ENCODE measurements at regions of chr13 and their contacts with region 1.

Region 1: GRCh38 chr13:113296842-113297369 is at the start of gene LAMP1:
- DNase-seq: peak; percentile 94
- H3K4me3 ChIP-seq: peak within 1 kb of the TSS; percentile 83 to 91 (median 91)
- H3K27ac ChIP-seq: peak within 1 kb of the TSS; percentile 78
- H3K4me1 ChIP-seq: peaks cover 3% of the 10 kb centered on the region
- H3K27me3 ChIP-seq: no peaks in the 10 kb centered on the region
- CTCF ChIP-seq: no peak
- total RNA-seq, gene LAMP1: 242 to 252 TPM

Region 2: GRCh38 chr13:113122550-113123225 is 174.2 kb before region 1 on chr13 and contains the start of gene F10:
- CTCF ChIA-PET with region 1: no interaction called
- dilution Hi-C with region 1: no loop called
- in situ Hi-C with region 1: no loop called
- intact Hi-C with region 1: no loop called
- DNase-seq: no peak
- H3K4me3 ChIP-seq: no peak within 1 kb of the TSS
- H3K27ac ChIP-seq: no peak within 1 kb of the TSS
- H3K4me1 ChIP-seq: no peaks in the 10 kb centered on the region
- H3K27me3 ChIP-seq: no peaks in the 10 kb centered on the region
- CTCF ChIP-seq: no peak
- total RNA-seq, gene F10: not detected

Region 3: GRCh38 chr13:113153810-113154748 is 142.8 kb before region 1 on chr13:
- CTCF ChIA-PET with region 1: interaction called, 20 read pairs
- dilution Hi-C with region 1: no loop called
- in situ Hi-C with region 1: no loop called
- intact Hi-C with region 1: no loop called
- DNase-seq: peak; percentile 29
- H3K4me3 ChIP-seq: peak overlapping the region; percentile 41 to 55 (median 48)
- H3K27ac ChIP-seq: no peak overlapping the region
- H3K4me1 ChIP-seq: peaks cover 9% of the 10 kb centered on the region
- H3K27me3 ChIP-seq: peaks cover 2% of the 10 kb centered on the region
- CTCF ChIP-seq: no peak

Region 4: DNA sequence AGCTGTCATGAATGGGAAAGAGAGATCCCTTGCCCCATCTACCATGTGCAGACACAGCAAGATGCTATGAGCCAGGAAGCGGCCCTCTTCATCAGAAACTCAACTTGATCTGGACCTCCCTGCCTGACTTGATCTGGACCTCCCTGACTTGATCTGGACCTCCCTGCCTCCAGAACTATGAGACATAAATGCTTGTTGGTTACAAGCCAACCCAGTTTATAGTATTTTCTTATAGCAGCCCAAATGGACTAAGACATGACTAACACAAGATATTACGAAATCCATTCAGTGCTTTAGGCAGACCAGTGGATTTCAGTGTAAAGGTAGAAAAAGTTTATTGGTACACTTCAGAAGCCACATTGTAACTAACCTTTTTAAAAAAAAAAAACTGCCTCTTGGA is 104.0 kb before region 1 on chr13:
- CTCF ChIA-PET with region 1: no interaction called
- dilution Hi-C with region 1: no loop called
- in situ Hi-C with region 1: no loop called
- intact Hi-C with region 1: no loop called
- DNase-seq: peak; percentile 56
- H3K4me3 ChIP-seq: no peak overlapping the region
- H3K27ac ChIP-seq: no peak overlapping the region
- H3K4me1 ChIP-seq: peaks cover 3% of the 10 kb centered on the region
- H3K27me3 ChIP-seq: no peaks in the 10 kb centered on the region
- CTCF ChIP-seq: no peak

Region 5: GRCh38 chr13:113258321-113259054 is 38.4 kb before region 1 on chr13:
- CTCF ChIA-PET with region 1: no interaction called
- dilution Hi-C with region 1: loop called (anchors 5 kb)
- in situ Hi-C with region 1: no loop called
- intact Hi-C with region 1: no loop called
- DNase-seq: no peak
- H3K4me3 ChIP-seq: no peak overlapping the region
- H3K27ac ChIP-seq: no peak overlapping the region
- H3K4me1 ChIP-seq: no peaks in the 10 kb centered on the region
- H3K27me3 ChIP-seq: no peaks in the 10 kb centered on the region
- CTCF ChIP-seq: no peak

Region 6: GRCh38 chr13:113364311-113364889 is 67.5 kb after region 1 on chr13:
- CTCF ChIA-PET with region 1: no interaction called
- dilution Hi-C with region 1: no loop called
- in situ Hi-C with region 1: no loop called
- intact Hi-C with region 1: loop called (anchors 5 kb)
- DNase-seq: no peak
- H3K4me3 ChIP-seq: peak overlapping the region in 1 of 3 experiments; percentile 35
- H3K27ac ChIP-seq: no peak overlapping the region
- H3K4me1 ChIP-seq: peaks cover 6% of the 10 kb centered on the region
- H3K27me3 ChIP-seq: no peaks in the 10 kb centered on the region
- CTCF ChIP-seq: no peak

Region 7: DNA sequence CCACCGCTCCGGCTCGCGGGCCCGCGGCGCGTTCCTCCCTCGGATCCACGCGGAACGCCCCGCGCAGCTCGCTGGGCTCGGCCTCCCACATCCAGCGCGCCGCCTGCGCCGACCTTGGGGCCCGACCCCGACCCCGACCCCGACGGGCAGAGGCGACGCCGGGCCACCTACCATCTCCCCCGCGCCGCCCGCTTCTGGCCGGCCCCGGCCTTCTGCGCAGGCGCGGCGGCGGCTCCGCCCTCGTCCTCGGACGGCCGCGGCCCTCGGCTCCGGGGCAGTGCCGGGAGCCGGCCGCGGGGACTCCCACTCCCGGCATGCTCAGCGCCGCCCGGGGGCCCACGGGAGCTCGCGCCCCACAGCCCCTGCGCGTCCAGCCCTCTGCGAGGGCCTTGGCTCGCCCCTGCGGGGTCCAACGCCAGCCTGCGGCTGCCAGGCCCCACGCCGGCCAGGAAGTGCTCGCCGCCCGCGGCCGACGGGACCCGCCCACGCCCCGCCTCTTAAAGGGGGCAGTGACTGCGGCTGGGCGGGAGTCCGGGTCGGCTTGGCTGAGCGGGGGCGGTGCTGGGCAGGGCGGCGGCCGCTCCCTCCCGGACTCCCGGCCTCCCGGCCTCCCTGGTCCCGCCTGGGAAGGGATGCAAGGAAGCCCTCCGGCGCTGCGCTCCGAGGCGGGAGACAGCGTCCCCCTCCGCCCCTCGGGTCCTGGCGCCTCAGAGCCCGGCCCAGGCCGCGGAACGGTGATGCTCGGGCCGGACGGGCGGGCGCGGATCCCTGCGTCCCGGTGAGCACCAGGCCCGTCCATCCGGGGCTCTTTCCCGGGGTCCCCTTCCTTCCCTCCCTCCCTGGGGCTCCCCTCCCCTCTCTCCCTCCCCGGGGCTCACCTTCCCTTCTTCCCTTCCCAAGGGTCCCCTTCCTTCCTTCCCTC is 193.9 kb after region 1 on chr13 and contains the start of gene DCUN1D2:
- CTCF ChIA-PET with region 1: no interaction called
- dilution Hi-C with region 1: no loop called
- in situ Hi-C with region 1: no loop called
- intact Hi-C with region 1: loop called (anchors 10 kb)
- DNase-seq: peak; percentile 96
- H3K4me3 ChIP-seq: peak within 1 kb of the TSS; percentile 78 to 87 (median 79)
- H3K27ac ChIP-seq: peak within 1 kb of the TSS; percentile 69
- H3K4me1 ChIP-seq: peaks cover 35% of the 10 kb centered on the region
- H3K27me3 ChIP-seq: no peaks in the 10 kb centered on the region
- CTCF ChIP-seq: no peak
- total RNA-seq, gene DCUN1D2: 11.3 to 21.6 TPM